Activated T-helper 2 cell treated with anti-CD3 and anti-CD28 coated beads, Interferon-gamma antibody, Interleukin-2, Interleukin-4, amounts not matched to agents 10 μg/mL and 5 μg/mL and 100 μg/mL, durations not matched to agents 14 hours and 24 hours and 36 hours (primary cell): ENCODE measurements at regions of chr9 and their contacts with region 1.

Region 1: DNA sequence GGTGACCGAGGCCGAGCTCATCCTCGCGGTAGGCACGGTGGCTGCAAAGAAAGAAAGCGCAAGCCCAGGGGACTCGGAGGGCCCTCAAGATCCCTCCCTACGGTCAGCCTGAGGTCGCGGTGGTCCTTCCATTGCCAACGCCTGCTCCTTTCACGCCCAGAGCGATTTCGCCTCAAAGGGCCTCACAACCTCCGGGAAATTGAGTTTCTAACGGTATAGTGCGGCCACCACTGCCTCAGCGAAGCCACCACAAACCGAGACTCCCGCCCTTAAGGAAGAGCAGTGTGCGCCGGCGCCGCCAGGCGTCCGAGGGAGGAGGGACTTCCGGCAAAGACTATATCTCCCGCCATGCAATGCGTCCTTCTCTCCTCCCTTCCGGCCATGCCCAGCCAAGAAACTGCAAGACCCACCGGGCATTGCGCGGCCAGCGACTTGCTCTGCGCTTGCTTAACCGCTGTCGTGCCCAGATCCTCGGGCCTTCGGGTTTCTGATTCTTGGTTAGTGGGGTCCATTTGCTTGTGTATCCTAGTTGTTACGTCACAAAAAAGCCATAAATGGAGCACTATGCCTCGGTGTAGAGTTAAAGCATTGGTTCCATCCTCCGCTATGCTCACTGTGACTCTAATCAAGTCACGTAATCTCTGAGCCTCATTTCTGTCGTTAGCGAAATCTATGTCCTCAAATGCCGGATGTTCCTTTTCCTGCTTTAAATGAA is at the start of gene HAUS6:
- DNase-seq: peak; percentile 94
- H3K4me3 Mint-ChIP-seq: peak within 1 kb of the TSS; percentile 93
- H3K27ac Mint-ChIP-seq: peak within 1 kb of the TSS; percentile 92
- H3K4me1 Mint-ChIP-seq: peaks cover 18% of the 10 kb centered on the region
- H3K27me3 Mint-ChIP-seq: no peaks in the 10 kb centered on the region
- total RNA-seq, gene HAUS6: 28.3 and 31.6 TPM in 2 replicates

Region 2: GRCh38 chr9:19048966-19049916 is 53.5 kb before region 1 on chr9 and contains the start of gene RRAGA:
- intact Hi-C with region 1: loop called (anchors 1 kb)
- DNase-seq: peak; percentile 94
- H3K4me3 Mint-ChIP-seq: peak within 1 kb of the TSS; percentile 96
- H3K27ac Mint-ChIP-seq: peak within 1 kb of the TSS; percentile 95
- H3K4me1 Mint-ChIP-seq: peaks cover 39% of the 10 kb centered on the region
- H3K27me3 Mint-ChIP-seq: no peaks in the 10 kb centered on the region
- total RNA-seq, gene RRAGA: 60.8 and 64.6 TPM in 2 replicates

Region 3: GRCh38 chr9:19161257-19162025 is 58.7 kb after region 1 on chr9:
- intact Hi-C with region 1: loop called (anchors 1 kb)
- DNase-seq: peak; percentile 56
- H3K4me3 Mint-ChIP-seq: peak overlapping the region; percentile 33
- H3K27ac Mint-ChIP-seq: peak overlapping the region; percentile 89
- H3K4me1 Mint-ChIP-seq: peaks cover 16% of the 10 kb centered on the region
- H3K27me3 Mint-ChIP-seq: no peaks in the 10 kb centered on the region

Region 4: DNA sequence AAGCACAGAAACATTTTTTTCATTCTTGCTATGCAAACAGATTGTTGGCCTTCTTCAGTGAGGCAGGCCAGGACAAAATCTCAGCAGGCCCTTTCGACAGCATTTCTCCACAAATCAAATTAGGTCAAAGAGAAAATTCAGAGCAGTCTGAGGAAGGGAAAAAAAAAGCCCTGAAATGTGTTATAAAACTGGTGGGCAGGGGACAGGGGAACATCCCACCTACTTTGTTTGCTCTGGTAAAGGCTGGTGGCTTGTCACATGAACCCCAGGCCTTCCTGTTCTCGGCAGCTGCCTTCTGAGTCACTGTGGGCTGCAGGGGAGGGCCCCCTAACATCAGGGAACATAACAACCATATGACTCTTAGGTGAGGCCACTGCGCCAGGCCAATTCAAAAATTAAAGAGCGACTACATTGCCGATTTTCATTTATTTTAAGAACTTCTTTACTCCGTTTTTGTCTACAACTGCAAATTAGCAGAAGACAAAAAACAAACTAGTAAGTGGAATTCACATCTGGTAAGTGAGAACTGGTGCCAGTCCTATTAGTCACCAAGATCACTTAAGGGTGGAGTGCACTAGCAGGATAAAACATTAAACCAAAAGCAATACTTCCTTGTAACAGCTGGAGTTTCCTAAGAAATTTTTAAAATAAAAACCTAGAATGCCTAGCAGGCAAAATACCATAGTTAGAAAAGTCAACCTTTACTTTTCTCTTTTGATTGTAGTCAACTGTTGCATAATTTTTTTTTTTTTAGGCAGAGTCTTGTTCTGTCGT is 81.5 kb after region 1 on chr9:
- intact Hi-C with region 1: loop called (anchors 1 kb)
- DNase-seq: peak; percentile 69
- H3K4me3 Mint-ChIP-seq: peak overlapping the region; percentile 37
- H3K27ac Mint-ChIP-seq: peak overlapping the region; percentile 92
- H3K4me1 Mint-ChIP-seq: peaks cover 19% of the 10 kb centered on the region
- H3K27me3 Mint-ChIP-seq: no peaks in the 10 kb centered on the region

Region 5: GRCh38 chr9:19379697-19380046 is 276.9 kb after region 1 on chr9:
- intact Hi-C with region 1: loop called (anchors 2 kb)
- DNase-seq: no peak
- H3K4me3 Mint-ChIP-seq: peak overlapping the region; percentile 96
- H3K27ac Mint-ChIP-seq: peak overlapping the region; percentile 98
- H3K4me1 Mint-ChIP-seq: peaks cover 38% of the 10 kb centered on the region
- H3K27me3 Mint-ChIP-seq: no peaks in the 10 kb centered on the region